GM12878 (cell line): ENCODE measurements at regions of chr14 and their contacts with region 1.

Region 1: GRCh38 chr14:24806061-24806678 is 172.2 kb upstream of the GZMB start:
- DNase-seq: peak; percentile 16
- ATAC-seq: peak; percentile 89
- H3K4me3 ChIP-seq: no peak overlapping the region
- H3K27ac ChIP-seq: no peak overlapping the region
- H3K4me1 ChIP-seq: no peaks in the 10 kb centered on the region
- H3K27me3 ChIP-seq: no peaks in the 10 kb centered on the region
- CTCF ChIP-seq: peak; percentile 79 to 92 (median 82)
- EP300 ChIP-seq: no peak
- POLR2A ChIP-seq: no peak
- RAD21 ChIP-seq: peak; percentile 75

Region 2: GRCh38 chr14:24141097-24141880 is 664.9 kb before region 1 on chr14 and contains the start of gene EMC9:
- CTCF ChIA-PET with region 1: no interaction called
- POLR2A ChIA-PET with region 1: no interaction called
- RAD21 ChIA-PET with region 1: no interaction called
- SMC1A ChIA-PET with region 1: no interaction called
- in situ Hi-C with region 1: no loop called
- intact Hi-C with region 1: no loop called
- DNase-seq: peak; percentile 97
- ATAC-seq: peak; percentile 92
- H3K4me3 ChIP-seq: peak within 1 kb of the TSS; percentile 94
- H3K27ac ChIP-seq: peak within 1 kb of the TSS; percentile 93
- H3K4me1 ChIP-seq: peaks cover 40% of the 10 kb centered on the region
- H3K27me3 ChIP-seq: no peaks in the 10 kb centered on the region
- CTCF ChIP-seq: peak in 2 of 3 experiments; percentile 27 to 35; a peak in 4 of 6 replicates
- EP300 ChIP-seq: peak in 1 of 2 experiments; percentile 58; a peak in 2 of 4 replicates
- POLR2A ChIP-seq: peak; percentile 94
- RAD21 ChIP-seq: no peak
- polyA plus RNA-seq, gene EMC9: 15.5 to 17.8 TPM

Region 3: GRCh38 chr14:24259252-24259995 is 546.7 kb before region 1 on chr14:
- CTCF ChIA-PET with region 1: no interaction called
- POLR2A ChIA-PET with region 1: no interaction called
- RAD21 ChIA-PET with region 1: no interaction called
- SMC1A ChIA-PET with region 1: no interaction called
- in situ Hi-C with region 1: no loop called
- intact Hi-C with region 1: no loop called
- DNase-seq: no peak
- ATAC-seq: no peak
- H3K4me3 ChIP-seq: no peak overlapping the region
- H3K27ac ChIP-seq: no peak overlapping the region
- H3K4me1 ChIP-seq: no peaks in the 10 kb centered on the region
- H3K27me3 ChIP-seq: no peaks in the 10 kb centered on the region
- CTCF ChIP-seq: no peak
- EP300 ChIP-seq: no peak
- POLR2A ChIP-seq: no peak
- RAD21 ChIP-seq: no peak

Region 4: DNA sequence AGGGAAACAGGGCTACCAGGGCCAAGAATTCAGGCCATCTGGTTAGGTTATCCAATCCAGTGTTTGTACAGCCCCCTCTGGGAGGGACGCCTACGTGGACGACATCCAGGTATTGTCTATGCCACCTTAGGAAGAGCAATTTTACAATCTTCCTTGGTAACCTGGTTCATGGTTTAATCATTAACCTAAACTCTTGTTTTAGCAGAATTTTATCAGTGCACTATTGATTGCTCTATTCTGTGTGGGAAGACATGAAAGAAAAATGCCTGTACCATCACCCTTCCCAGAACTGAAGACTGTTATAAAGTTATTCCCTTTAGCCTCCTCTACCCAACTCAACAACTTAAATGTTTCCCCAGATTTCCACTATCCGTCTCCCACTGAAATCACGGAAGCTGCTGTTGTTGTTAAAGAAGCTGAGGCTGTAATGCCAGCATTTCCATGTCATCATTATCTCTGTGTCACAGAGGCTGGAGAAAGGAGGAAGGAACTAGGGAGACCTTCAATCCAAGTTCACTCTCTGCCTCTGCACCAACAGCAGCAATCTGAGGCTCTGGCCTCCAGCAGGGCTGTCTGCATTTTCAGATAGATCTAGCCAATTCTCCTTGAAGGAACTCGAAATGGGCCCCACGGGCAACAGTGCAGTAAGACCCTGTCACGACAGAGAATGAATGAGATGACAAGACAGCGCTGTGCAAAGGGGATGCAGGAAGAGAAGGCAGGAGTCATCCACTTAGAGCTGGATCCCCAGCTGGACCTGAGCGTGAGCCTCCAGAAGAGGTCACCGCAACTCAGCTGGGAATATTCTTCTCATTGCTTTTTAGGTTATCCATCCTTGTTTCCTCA is 11.3 kb after region 1 on chr14:
- CTCF ChIA-PET with region 1: interaction called, 15 read pairs
- POLR2A ChIA-PET with region 1: no interaction called
- RAD21 ChIA-PET with region 1: interaction called, 12 read pairs
- SMC1A ChIA-PET with region 1: interaction called, 29 read pairs
- in situ Hi-C with region 1: no loop called
- intact Hi-C with region 1: no loop called
- DNase-seq: no peak
- ATAC-seq: peak; percentile 14; the same call in 1 of the 3 replicates
- H3K4me3 ChIP-seq: no peak overlapping the region
- H3K27ac ChIP-seq: no peak overlapping the region
- H3K4me1 ChIP-seq: no peaks in the 10 kb centered on the region
- H3K27me3 ChIP-seq: no peaks in the 10 kb centered on the region; a peak in 1 of 4 replicates
- CTCF ChIP-seq: peak in 1 of 3 experiments; percentile 41; a peak in 2 of 6 replicates
- EP300 ChIP-seq: no peak
- POLR2A ChIP-seq: no peak
- RAD21 ChIP-seq: no peak

Region 5: GRCh38 chr14:24921903-24922302 is 115.7 kb after region 1 on chr14:
- CTCF ChIA-PET with region 1: interaction called, 5 read pairs
- POLR2A ChIA-PET with region 1: no interaction called
- RAD21 ChIA-PET with region 1: interaction called, 13 read pairs
- SMC1A ChIA-PET with region 1: interaction called, 17 read pairs
- in situ Hi-C with region 1: no loop called
- intact Hi-C with region 1: no loop called
- DNase-seq: no peak
- ATAC-seq: peak; percentile 14; the same call in 1 of the 3 replicates
- H3K4me3 ChIP-seq: no peak overlapping the region
- H3K27ac ChIP-seq: no peak overlapping the region
- H3K4me1 ChIP-seq: no peaks in the 10 kb centered on the region
- H3K27me3 ChIP-seq: no peaks in the 10 kb centered on the region
- CTCF ChIP-seq: no peak
- EP300 ChIP-seq: no peak
- POLR2A ChIP-seq: no peak
- RAD21 ChIP-seq: no peak

Region 6: DNA sequence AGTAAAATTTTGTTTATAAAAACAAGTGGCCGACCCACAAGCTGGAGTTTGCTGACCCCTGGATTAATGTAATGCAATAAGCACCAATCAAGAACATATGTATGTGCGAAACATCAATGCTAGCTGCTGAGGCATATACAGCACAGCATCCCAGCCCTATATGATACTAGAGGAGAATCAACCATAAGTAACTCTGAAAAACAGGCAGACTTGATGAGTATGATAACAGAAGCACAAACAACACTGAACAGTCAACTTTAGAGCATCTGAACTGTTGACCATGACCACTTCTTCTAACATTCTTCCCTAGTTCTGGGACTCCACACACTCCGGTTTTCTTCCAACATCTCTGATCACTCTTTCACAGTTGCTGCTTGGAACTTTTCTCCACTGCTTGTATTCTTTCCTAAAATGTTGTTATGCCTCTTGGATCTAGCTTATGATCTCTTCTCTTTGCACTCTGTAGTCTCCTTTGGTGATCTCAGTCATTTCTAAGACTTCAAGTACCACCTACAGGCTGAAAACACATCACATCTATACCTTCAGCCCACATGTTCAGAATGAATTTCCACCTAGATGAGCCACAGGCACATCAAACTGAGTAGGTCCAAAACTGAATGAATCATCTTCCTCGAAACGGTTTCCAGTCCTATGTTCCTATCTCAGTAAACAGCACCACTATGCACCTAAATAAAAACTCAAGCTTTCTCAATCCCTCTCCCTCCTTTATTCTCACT is 186.6 kb after region 1 on chr14:
- CTCF ChIA-PET with region 1: interaction called, 79 read pairs
- POLR2A ChIA-PET with region 1: no interaction called
- RAD21 ChIA-PET with region 1: interaction called, 56 read pairs
- SMC1A ChIA-PET with region 1: interaction called, 55 read pairs
- in situ Hi-C with region 1: no loop called
- intact Hi-C with region 1: loop called (anchors 5 kb)
- DNase-seq: no peak
- ATAC-seq: peak; percentile 69
- H3K4me3 ChIP-seq: no peak overlapping the region
- H3K27ac ChIP-seq: no peak overlapping the region
- H3K4me1 ChIP-seq: no peaks in the 10 kb centered on the region; the same call in 1 of the 2 replicates
- H3K27me3 ChIP-seq: no peaks in the 10 kb centered on the region
- CTCF ChIP-seq: peak in 1 of 3 experiments; percentile 25; a peak in 1 of 6 replicates
- EP300 ChIP-seq: no peak
- POLR2A ChIP-seq: no peak
- RAD21 ChIP-seq: no peak

Region 7: DNA sequence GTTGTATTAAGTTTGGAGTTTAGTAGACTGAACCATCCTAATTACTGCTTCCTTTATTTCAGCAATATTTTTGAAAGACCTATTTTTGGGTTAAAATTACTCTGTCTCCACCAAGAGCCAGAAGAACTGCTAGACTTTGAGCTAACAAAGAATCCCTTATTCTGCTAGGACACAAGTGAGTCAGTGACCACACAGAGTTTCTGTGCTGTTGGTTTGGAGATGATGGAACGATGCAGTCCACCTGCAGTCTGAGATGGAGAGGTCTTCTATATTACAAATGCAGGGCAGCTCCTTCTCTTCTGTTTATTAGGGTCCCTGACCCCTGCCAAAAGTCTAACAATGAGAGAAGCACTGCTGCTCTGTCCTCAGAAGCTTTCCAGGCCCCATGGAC is 250.5 kb after region 1 on chr14:
- CTCF ChIA-PET with region 1: interaction called, 12 read pairs
- POLR2A ChIA-PET with region 1: interaction called, 3 read pairs
- RAD21 ChIA-PET with region 1: interaction called, 6 read pairs
- SMC1A ChIA-PET with region 1: interaction called, 13 read pairs
- in situ Hi-C with region 1: no loop called
- intact Hi-C with region 1: no loop called
- DNase-seq: no peak
- ATAC-seq: peak; percentile 79
- H3K4me3 ChIP-seq: no peak overlapping the region
- H3K27ac ChIP-seq: no peak overlapping the region
- H3K4me1 ChIP-seq: no peaks in the 10 kb centered on the region
- H3K27me3 ChIP-seq: peaks cover 0 to 7% of the 10 kb centered on the region in 2 experiments; a peak in 1 of 4 replicates
- CTCF ChIP-seq: no peak
- EP300 ChIP-seq: no peak
- POLR2A ChIP-seq: no peak
- RAD21 ChIP-seq: no peak

Region 8: GRCh38 chr14:25150934-25151790 is 345.0 kb after region 1 on chr14:
- CTCF ChIA-PET with region 1: interaction called, 31 read pairs
- POLR2A ChIA-PET with region 1: no interaction called
- RAD21 ChIA-PET with region 1: interaction called, 25 read pairs
- SMC1A ChIA-PET with region 1: interaction called, 63 read pairs
- in situ Hi-C with region 1: no loop called
- intact Hi-C with region 1: loop called (anchors 2 kb)
- DNase-seq: peak; percentile 1
- ATAC-seq: peak; percentile 64
- H3K4me3 ChIP-seq: no peak overlapping the region
- H3K27ac ChIP-seq: no peak overlapping the region
- H3K4me1 ChIP-seq: no peaks in the 10 kb centered on the region
- H3K27me3 ChIP-seq: no peaks in the 10 kb centered on the region
- CTCF ChIP-seq: peak; percentile 63 to 76 (median 67)
- EP300 ChIP-seq: no peak
- POLR2A ChIP-seq: no peak
- RAD21 ChIP-seq: peak; percentile 58

Region 9: DNA sequence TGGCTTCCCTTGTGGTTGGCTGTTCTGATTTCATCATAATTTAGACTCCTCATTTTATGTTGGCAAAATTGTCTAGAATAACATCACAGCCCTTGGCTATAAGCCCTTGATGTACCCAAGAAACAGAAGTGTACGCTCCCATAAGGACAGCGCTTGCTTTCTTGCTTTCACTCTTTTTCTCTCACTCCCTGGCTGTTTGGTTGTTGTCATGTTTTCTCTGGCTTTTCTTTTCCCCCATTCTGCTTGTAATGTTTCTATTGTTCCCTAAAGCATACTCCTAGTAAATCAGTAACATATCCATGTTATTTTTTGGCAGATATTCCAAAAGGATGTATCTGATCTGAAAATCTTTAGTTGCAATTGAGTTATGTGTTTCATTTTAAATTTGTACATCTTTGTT is 1261.2 kb after region 1 on chr14:
- CTCF ChIA-PET with region 1: no interaction called
- POLR2A ChIA-PET with region 1: no interaction called
- RAD21 ChIA-PET with region 1: no interaction called
- SMC1A ChIA-PET with region 1: no interaction called
- in situ Hi-C with region 1: no loop called
- intact Hi-C with region 1: no loop called
- DNase-seq: no peak
- ATAC-seq: no peak
- H3K4me3 ChIP-seq: no peak overlapping the region
- H3K27ac ChIP-seq: no peak overlapping the region
- H3K4me1 ChIP-seq: no peaks in the 10 kb centered on the region
- H3K27me3 ChIP-seq: no peaks in the 10 kb centered on the region
- CTCF ChIP-seq: no peak
- EP300 ChIP-seq: no peak
- POLR2A ChIP-seq: no peak
- RAD21 ChIP-seq: no peak